PC-3 (cell line): ENCODE measurements at regions of chr6 and their contacts with region 1.

Region 1: DNA sequence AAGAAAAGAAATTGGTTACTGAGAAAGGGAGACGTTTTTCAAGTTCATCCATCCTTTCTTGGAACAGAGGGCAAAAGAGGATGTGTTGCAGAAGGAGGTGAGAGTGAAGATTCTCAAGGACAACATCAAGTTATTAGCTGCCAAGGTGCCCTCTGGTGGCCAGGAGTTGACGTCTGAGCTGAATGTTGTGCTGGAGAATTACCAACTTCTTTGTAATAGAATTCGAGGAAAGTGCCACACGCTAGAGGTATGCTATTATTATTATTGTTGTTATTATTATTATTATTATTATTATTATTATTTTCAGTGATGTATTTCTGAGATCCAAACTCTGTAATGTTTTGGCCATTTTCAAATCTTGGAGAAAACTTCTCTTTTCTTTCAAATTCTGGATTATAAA is 197.0 kb downstream of the UTRN start:
- DNase-seq: peak; percentile 81
- ATAC-seq: peak; percentile 46
- H3K4me3 ChIP-seq: no peak overlapping the region
- H3K27ac ChIP-seq: no peak overlapping the region
- H3K4me1 ChIP-seq: no peaks in the 10 kb centered on the region
- H3K27me3 ChIP-seq: no peaks in the 10 kb centered on the region
- CTCF ChIP-seq: peak; percentile 61

Region 2: GRCh38 chr6:144104898-144105487 is 377.1 kb before region 1 on chr6:
- CTCF ChIA-PET with region 1: interaction called, 3 read pairs
- POLR2A ChIA-PET with region 1: no interaction called
- intact Hi-C with region 1: loop called (anchors 2 kb)
- DNase-seq: peak; percentile 81
- ATAC-seq: peak; percentile 79
- H3K4me3 ChIP-seq: no peak overlapping the region
- H3K27ac ChIP-seq: no peak overlapping the region
- H3K4me1 ChIP-seq: no peaks in the 10 kb centered on the region
- H3K27me3 ChIP-seq: no peaks in the 10 kb centered on the region
- CTCF ChIP-seq: peak; percentile 80

Region 3: DNA sequence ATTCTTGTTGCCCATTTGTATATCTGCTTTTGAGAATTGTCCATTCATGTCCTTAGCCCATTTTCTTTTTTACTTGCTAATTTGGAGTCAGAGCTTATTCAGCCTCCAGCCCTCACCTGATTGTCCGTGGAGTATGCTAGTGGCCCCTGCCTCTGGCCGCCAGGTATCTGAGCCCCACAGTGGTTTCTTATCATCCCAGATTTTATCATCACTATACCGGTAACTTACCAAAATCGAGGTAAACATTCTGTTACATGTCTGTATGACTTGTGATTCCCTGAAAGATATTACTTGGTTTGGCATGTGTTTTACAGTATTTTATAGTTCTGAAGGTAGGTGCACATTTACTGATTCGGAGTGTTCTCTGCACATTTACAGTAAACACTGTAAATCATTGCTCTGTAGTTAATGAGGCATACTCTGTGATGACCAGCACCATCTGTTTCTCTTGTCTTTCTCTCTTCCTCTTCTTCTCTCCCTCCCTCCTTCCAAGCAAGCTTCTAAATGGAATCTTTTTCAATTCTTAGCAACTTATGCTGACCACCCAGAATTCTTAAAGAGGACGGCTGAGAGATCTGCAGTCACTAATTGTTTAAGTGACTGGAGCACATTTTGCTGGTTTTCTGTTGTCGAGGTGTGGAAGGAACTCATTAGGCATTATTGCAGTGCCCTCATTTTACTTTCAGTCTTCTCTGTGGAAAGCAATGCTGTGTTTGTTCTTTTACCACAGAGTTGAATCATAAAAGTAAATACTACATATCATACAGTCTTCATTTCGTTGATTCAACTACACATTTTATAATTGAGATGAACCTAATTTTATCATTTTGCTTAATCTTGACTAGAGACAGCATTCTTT is 70.6 kb before region 1 on chr6:
- CTCF ChIA-PET with region 1: no interaction called
- POLR2A ChIA-PET with region 1: no interaction called
- intact Hi-C with region 1: loop called (anchors 5 kb)
- DNase-seq: peak; percentile 56
- ATAC-seq: peak; percentile 39
- H3K4me3 ChIP-seq: peak overlapping the region; percentile 66
- H3K27ac ChIP-seq: peak overlapping the region; percentile 85
- H3K4me1 ChIP-seq: peaks cover 46% of the 10 kb centered on the region
- H3K27me3 ChIP-seq: no peaks in the 10 kb centered on the region
- CTCF ChIP-seq: no peak

Region 4: GRCh38 chr6:144519426-144519825 is 37.3 kb after region 1 on chr6:
- CTCF ChIA-PET with region 1: no interaction called
- POLR2A ChIA-PET with region 1: no interaction called
- intact Hi-C with region 1: no loop called
- DNase-seq: no peak
- ATAC-seq: no peak
- H3K4me3 ChIP-seq: no peak overlapping the region
- H3K27ac ChIP-seq: no peak overlapping the region
- H3K4me1 ChIP-seq: no peaks in the 10 kb centered on the region
- H3K27me3 ChIP-seq: no peaks in the 10 kb centered on the region
- CTCF ChIP-seq: no peak